ENCODE measurements at regions of chr5 and their contacts with region 1.

Region 1: DNA sequence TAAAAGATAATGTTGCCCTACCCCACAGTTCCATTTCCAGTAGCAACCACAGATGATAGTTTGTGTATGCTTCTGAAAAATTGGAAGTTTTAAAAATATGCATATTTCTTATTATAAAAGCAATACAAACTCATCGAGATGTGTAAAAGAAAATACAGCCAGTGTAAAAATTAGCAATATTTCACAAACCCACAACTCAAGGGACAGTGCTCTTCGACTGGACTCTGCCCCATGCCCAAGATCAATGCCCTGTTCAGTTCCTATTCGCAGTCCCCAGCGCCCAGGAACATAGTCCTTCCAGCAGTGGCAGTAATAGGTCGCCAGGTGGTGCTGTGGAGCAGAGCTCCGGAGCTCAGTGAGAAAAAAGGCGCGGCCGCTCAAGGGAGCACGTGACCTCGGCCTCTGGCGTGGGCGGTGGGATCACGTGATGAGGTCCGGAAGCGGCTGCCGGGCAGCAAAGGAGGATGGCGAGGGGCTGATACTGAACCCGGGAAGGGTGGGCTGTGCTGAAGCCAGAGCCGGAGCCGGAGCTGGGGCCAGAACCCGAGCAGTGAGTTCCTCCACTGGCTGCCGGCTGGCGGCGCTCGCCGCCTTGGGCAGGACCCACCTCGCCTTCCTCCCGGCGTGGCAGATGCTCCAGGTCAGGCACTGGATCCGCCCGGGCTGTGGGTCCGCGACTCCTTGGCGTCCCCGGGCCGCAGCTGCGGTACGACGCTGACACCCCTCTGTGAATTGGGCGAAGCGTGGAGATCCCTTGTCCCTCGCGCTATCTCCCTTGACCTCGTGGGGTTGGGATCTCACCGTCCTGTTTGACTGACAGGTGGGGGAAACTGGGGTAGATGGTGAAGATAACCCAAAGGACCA is at the start of gene SLC36A1:
- DNase-seq: peak; percentile 94 to 99
- H3K4me3 ChIP-seq: peak within 1 kb of the TSS; percentile 80
- CTCF ChIP-seq: peak in 1 of 3 donors; percentile 88
- POLR2A ChIP-seq: no peak
- total RNA-seq, gene SLC36A1: 4.8 to 7.0 (median 6.5) TPM

Region 2: DNA sequence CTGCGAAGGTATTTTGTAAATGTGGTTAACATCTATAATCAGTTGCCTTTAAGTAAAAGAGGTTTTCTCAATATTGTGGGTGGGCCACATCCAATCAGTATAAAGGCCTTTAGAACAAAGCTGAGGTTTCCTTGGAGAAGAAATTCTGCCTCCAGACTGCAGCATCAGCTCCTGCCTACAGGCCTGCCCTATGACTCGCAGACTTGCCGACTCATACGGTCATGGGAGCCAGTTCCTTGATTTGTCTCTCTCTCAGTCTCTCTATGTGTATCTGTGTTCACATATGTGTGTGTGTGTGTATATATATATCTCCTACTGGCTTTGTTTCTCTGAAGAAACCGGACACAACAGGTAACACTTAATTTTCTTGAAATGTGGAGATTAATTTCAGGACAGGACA is 45.3 kb after region 1 on chr5:
- intact Hi-C with region 1: loop called (anchors 10 kb)
- DNase-seq: no peak
- H3K4me3 ChIP-seq: no peak overlapping the region
- CTCF ChIP-seq: no peak
- POLR2A ChIP-seq: no peak

Region 3: DNA sequence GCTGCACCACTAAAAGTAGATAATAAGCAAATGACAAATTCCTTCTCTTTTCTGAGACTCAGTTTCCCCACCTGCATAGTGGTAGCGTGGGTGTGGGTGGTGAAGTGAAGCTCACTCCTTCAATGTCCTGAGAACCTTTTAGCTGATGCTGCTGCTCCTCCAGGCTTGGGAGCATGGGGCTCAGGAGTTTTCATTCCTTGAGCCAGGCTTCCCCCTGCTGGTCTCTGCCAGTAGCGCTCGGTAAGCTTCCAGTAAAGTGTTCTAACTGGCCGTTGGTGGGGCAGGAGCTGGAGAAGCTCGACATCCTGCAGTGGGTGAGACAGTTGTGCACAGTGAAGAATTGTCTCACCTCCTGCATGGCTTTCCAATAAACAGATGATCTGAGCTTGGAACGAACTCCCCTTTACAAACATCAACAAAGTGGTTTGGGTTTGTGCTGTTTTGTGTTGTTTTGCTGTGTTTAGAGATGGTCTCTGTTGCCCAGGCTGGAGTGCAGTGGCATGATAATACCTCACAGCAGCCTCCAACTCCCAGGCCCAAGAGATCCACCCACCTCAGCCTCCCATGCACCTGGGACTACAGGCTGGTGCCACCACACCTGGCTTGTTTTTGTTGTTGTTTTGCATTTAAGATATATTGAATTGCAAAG is 204.7 kb after region 1 on chr5:
- intact Hi-C with region 1: loop called (anchors 5 kb)
- DNase-seq: peak; percentile 83 to 94
- H3K4me3 ChIP-seq: no peak overlapping the region
- CTCF ChIP-seq: peak in 2 of 3 donors; percentile 30 to 75
- POLR2A ChIP-seq: no peak

Region 4: GRCh38 chr5:151740336-151740942 is 293.0 kb after region 1 on chr5:
- intact Hi-C with region 1: loop called (anchors 10 kb)
- DNase-seq: peak; percentile 44 to 89
- H3K4me3 ChIP-seq: no peak overlapping the region
- CTCF ChIP-seq: peak in 1 of 3 donors; percentile 52
- POLR2A ChIP-seq: no peak